ENCODE measurements at regions of chr2 and their contacts with region 1.

Region 1: DNA sequence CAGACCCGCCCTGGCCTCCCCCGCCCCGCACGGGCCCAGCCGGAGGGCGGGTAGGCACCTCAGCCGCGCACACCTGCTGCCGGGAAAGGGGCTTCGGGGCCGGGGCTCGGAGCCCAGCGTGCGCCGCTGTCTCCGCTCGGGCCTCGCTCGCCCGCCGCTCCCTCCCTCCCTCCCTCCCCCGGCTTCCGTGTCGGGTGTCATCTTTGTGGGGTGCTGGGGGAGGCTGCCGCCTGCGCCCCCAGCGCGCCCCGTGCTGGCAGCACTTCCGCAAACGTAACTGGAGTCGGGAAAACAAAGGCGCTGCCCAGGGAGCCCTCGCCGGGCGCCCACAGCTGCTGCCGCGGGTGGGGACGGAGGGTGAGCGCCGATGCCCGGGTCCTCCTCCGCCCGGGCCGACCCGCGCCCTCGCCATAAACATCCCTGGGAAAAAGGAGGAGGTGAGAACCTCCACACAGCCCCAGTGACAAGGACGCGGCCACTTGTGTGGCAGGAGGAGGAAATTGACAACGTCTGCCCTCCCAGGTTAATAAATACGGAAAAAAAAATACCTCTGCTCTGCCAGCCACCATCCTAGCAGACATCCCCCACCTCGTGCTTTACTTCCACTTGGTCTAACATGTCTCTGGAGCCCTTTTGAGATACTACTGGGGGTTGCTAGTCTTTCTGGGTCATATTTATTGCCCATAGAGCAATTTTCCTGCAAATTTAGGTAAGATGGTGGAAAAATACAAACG is 550 bp downstream of the MFSD6 start:
- DNase-seq: peak; percentile 65 to 97 (median 78)

Region 2: DNA sequence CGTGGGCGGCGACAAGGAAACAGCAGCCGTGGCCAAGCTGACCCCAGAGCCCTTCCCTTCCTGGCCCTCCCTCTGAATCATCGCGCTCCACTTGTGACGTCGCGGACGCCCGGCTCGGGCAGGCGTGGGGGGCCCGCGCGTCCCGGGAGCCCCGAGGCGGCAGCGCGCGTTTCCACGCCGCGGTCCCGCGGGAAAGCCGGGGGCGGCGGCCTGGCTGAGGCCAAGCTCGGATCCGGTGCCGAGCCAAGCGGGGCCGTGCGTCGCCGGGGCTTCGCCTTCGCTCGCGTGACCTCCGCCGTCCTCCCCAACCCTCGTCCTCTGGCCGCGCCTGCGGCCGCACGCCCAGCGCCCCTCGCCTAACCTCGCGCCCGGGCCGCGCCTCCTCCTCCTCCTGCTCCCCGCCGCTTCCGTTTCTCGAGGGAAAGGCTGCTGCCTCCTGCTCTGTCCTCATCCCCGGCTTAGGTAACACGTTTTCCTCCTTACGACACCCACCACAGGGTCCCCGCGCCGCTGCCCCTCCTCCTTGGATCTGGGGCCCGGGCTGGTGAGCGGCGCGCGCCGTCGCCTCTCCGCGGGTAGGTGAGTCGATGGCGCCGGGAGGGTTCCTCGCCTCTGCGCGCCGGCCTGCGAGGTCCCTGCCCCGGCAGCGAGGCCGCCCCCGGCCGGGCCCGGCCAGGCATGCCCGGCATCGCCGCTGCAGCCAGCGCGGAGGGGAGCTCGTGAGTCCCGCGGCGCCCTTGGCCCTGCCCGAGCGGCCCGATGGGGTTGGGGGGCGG is 65.0 kb before region 1 on chr2 and contains the start of gene INPP1:
- intact Hi-C with region 1: loop called (anchors 10 kb)
- DNase-seq: peak; percentile 31 to 94 (median 56)

Region 3: DNA sequence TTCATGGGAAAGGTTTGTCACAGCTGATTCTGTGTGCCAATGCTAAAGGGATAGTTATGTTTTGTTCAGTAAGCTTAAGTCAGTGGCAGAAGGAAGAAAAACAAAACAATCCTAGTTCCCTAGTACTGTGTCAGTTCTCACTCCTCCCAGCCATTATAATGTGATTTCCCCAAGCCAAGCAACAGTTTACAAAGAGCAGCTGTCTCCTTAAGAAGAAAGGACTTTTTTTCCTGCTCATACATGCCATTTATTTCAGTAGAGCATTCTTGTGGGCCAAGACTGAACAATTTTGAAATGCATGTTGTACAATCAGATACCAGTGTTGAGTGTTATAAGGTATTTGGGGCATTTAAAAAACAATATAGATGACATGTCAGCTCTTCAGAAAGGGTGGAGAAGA is 73.7 kb after region 1 on chr2:
- intact Hi-C with region 1: loop called (anchors 5 kb)
- DNase-seq: no peak

Measured in posterior cingulate gyrus (tissue), 11 donors.